ENCODE measurements at regions of chr2 and their contacts with region 1.

Region 1: GRCh38 chr2:219498280-219499057 is at the start of gene GMPPA:
- DNase-seq: peak; percentile 98
- ATAC-seq: peak; percentile 84
- H3K4me3 Mint-ChIP-seq: peak within 1 kb of the TSS; percentile 98
- H3K27ac Mint-ChIP-seq: peak within 1 kb of the TSS; percentile 99
- H3K4me1 Mint-ChIP-seq: peaks cover 52% of the 10 kb centered on the region
- H3K27me3 Mint-ChIP-seq: peaks cover 45% of the 10 kb centered on the region
- CTCF ChIP-seq: no peak
- total RNA-seq, gene GMPPA: 44.2 to 51.9 TPM (median 49.5 TPM) in 3 replicates

Region 2: DNA sequence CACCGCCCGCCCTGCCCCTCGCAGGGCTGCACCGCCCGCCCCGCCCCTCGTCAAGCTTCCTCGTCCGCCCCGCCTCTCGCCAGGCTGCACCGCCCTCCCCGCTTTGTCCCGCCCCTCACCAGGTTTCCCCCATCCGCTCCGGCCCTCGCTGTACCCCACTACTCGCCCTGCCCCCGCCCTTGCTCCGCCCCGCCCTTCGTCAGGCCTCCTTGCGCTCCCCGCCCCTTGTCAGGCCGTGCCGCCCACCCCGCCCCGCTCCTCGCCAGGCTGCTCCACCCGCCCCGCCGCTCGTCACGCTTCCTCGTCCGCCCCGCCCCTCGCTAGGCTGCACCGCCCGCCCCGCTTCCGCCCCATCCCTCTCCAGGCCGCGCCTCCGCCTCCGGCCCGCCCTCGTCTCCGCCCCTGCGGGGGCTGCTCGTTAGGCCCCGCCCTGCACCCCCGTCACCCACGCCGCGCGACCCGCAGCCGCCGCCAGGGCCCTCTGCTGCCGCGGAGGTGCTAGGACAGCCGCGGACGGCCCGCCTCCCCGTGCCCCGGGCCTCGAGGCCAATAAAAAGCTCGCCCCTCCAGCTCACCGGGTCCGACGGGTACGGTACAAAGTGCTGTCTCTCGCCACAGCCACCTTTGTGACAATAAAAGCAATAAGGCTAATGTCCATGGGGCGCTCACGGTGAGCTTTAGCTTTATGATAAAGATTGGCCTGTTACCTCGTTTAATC is 110.2 kb before region 1 on chr2:
- CTCF ChIA-PET with region 1: interaction called, 32 read pairs
- POLR2A ChIA-PET with region 1: interaction called, 4 read pairs
- DNase-seq: peak; percentile 97
- ATAC-seq: peak; percentile 76
- H3K4me3 Mint-ChIP-seq: peak overlapping the region; percentile 76
- H3K27ac Mint-ChIP-seq: no peak overlapping the region; the same call in 1 of the 2 replicates
- H3K4me1 Mint-ChIP-seq: peaks cover 7% of the 10 kb centered on the region
- H3K27me3 Mint-ChIP-seq: 0 out of 2 replicates have a peak, but pooled peaks cover 3% of the 10 kb centered on the region
- CTCF ChIP-seq: no peak

Region 3: GRCh38 chr2:219430633-219431615 is 67.5 kb before region 1 on chr2:
- CTCF ChIA-PET with region 1: interaction called, 27 read pairs
- POLR2A ChIA-PET with region 1: no interaction called
- DNase-seq: no peak
- ATAC-seq: peak; percentile 36
- H3K4me3 Mint-ChIP-seq: no peak overlapping the region
- H3K27ac Mint-ChIP-seq: peak overlapping the region; percentile 69; the same call in 1 of the 2 replicates
- H3K4me1 Mint-ChIP-seq: peaks cover 8% of the 10 kb centered on the region
- H3K27me3 Mint-ChIP-seq: peaks cover 20% of the 10 kb centered on the region
- CTCF ChIP-seq: no peak

Region 4: DNA sequence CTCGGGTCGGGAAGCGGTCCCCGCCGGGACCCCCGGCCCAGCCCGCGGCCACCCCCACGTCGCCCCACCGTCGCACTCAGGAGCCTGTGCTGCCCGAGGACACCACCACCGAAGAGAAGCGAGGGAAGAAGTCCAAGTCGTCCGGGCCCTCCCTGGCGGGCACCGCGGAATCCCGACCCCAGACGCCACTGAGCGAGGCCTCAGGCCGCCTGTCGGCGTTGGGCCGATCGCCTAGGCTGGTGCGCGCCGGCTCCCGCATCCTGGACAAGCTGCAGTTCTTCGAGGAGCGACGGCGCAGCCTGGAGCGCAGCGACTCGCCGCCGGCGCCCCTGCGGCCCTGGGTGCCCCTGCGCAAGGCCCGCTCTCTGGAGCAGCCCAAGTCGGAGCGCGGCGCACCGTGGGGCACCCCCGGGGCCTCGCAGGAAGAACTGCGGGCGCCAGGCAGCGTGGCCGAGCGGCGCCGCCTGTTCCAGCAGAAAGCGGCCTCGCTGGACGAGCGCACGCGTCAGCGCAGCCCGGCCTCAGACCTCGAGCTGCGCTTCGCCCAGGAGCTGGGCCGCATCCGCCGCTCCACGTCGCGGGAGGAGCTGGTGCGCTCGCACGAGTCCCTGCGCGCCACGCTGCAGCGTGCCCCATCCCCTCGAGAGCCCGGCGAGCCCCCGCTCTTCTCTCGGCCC is 50.2 kb before region 1 on chr2:
- CTCF ChIA-PET with region 1: interaction called, 12 read pairs
- POLR2A ChIA-PET with region 1: no interaction called
- DNase-seq: peak; percentile 69
- ATAC-seq: peak; percentile 43
- H3K4me3 Mint-ChIP-seq: peak overlapping the region; percentile 33; the same call in 1 of the 2 replicates
- H3K27ac Mint-ChIP-seq: no peak overlapping the region
- H3K4me1 Mint-ChIP-seq: peaks cover 13% of the 10 kb centered on the region
- H3K27me3 Mint-ChIP-seq: peaks cover 7% of the 10 kb centered on the region
- CTCF ChIP-seq: no peak

Region 5: DNA sequence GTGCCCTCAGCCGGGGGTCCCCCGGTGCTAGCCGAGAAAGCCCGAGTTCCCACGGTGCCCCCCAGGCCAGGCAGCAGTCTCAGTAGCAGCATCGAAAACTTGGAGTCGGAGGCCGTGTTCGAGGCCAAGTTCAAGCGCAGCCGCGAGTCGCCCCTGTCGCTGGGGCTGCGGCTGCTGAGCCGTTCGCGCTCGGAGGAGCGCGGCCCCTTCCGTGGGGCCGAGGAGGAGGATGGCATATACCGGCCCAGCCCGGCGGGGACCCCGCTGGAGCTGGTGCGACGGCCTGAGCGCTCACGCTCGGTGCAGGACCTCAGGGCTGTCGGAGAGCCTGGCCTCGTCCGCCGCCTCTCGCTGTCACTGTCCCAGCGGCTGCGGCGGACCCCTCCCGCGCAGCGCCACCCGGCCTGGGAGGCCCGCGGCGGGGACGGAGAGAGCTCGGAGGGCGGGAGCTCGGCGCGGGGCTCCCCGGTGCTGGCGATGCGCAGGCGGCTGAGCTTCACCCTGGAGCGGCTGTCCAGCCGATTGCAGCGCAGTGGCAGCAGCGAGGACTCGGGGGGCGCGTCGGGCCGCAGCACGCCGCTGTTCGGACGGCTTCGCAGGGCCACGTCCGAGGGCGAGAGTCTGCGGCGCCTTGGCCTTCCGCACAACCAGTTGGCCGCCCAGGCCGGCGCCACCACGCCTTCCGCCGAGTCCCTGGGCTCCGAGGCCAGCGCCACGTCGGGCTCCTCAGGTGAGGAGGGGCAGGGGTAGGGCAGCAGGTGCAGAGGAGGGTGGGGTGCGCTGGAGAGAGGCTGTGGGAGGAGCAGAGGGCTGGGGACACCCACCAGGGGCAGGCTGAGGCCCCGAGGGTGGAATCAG is 13.9 kb before region 1 on chr2:
- CTCF ChIA-PET with region 1: interaction called, 147 read pairs
- POLR2A ChIA-PET with region 1: interaction called, 3 read pairs
- DNase-seq: peak; percentile 65
- ATAC-seq: peak; percentile 20
- H3K4me3 Mint-ChIP-seq: peak overlapping the region; percentile 52
- H3K27ac Mint-ChIP-seq: no peak overlapping the region
- H3K4me1 Mint-ChIP-seq: peaks cover 35% of the 10 kb centered on the region
- H3K27me3 Mint-ChIP-seq: peaks cover 32% of the 10 kb centered on the region
- CTCF ChIP-seq: no peak

Region 6: GRCh38 chr2:219560037-219560892 is 61.8 kb after region 1 on chr2:
- CTCF ChIA-PET with region 1: interaction called, 10 read pairs
- POLR2A ChIA-PET with region 1: no interaction called
- DNase-seq: no peak
- ATAC-seq: peak; percentile 4
- H3K4me3 Mint-ChIP-seq: no peak overlapping the region
- H3K27ac Mint-ChIP-seq: peak overlapping the region; percentile 84
- H3K4me1 Mint-ChIP-seq: peaks cover 56% of the 10 kb centered on the region
- H3K27me3 Mint-ChIP-seq: peaks cover 4% of the 10 kb centered on the region; the same call in 1 of the 2 replicates
- CTCF ChIP-seq: peak; percentile 91

Measured in WTC11 (cell line).